ENCODE measurements at regions of chr5 and their contacts with region 1.

Region 1: GRCh38 chr5:108521841-108522506 is 140.1 kb upstream of the FBXL17 start:
- DNase-seq: peak; percentile 92
- ATAC-seq: peak; percentile 96
- H3K4me3 ChIP-seq: no peak overlapping the region
- H3K27ac ChIP-seq: no peak overlapping the region
- H3K4me1 ChIP-seq: no peaks in the 10 kb centered on the region
- H3K27me3 ChIP-seq: no peaks in the 10 kb centered on the region
- CTCF ChIP-seq: peak; percentile 94

Region 2: DNA sequence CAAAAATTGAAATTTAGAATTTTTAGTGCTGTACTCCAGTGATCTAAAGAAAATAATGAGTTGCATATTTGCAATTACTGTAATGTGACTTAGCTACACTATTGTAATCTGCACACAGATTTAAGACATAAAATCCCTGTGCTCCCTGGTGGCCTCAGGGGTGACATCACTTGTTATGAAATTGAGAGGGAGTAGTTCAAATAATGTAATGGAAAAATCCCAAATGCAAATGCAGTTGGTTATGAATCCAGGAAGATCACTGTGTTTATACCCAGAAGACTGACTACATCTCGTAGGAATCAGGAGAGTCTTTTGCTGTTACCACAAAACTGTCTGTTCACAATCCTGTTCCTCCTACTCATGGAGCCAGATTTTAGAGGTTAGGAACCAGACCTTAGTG is 38.6 kb after region 1 on chr5:
- CTCF ChIA-PET with region 1: no interaction called
- POLR2A ChIA-PET with region 1: no interaction called
- intact Hi-C with region 1: no loop called
- DNase-seq: peak; percentile 15
- ATAC-seq: peak; percentile 22
- H3K4me3 ChIP-seq: no peak overlapping the region
- H3K27ac ChIP-seq: no peak overlapping the region
- H3K4me1 ChIP-seq: no peaks in the 10 kb centered on the region
- H3K27me3 ChIP-seq: no peaks in the 10 kb centered on the region; the same call in 1 of the 2 replicates
- CTCF ChIP-seq: no peak

Region 3: DNA sequence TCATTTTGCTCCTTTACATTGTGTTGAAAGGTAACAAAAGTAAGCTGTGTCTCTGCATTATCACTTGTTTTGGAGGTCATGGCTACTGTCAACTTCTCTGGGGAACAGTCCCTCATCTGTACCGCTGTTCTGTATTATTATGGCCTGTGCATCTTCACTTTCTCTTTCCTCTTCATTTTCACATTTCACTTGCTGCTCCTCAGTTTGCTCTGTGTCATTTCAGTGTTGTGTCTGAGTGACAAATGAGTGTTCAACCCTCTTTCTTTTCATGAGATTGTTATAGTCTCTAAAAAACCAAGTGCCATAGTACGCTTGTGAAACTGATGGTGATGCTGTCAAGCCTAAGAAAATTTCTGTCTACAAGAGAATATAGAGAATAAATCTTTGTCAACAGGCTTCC is 103.7 kb after region 1 on chr5:
- CTCF ChIA-PET with region 1: no interaction called
- POLR2A ChIA-PET with region 1: no interaction called
- intact Hi-C with region 1: loop called (anchors 5 kb)
- DNase-seq: no peak
- ATAC-seq: no peak
- H3K4me3 ChIP-seq: no peak overlapping the region
- H3K27ac ChIP-seq: no peak overlapping the region
- H3K4me1 ChIP-seq: no peaks in the 10 kb centered on the region
- H3K27me3 ChIP-seq: no peaks in the 10 kb centered on the region
- CTCF ChIP-seq: no peak

Region 4: DNA sequence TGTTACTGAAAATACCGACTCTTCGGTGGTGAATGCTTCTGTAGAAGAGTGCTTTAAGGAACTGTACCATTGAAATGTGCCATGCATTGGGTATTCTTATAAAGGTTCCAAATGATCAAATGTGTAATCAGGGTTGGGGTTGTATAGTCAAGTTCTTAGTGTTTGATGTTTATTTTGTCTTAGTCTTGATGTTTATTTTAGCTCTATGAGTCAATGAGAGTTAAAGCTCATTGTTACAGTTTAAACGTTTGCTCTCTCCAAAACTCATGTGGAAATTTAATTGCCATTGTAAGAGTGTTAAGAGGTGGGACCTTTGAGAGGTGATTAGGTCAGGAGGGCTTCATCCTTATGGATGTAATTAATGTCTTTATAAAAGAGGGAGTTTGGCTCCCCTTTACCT is 378.7 kb after region 1 on chr5:
- CTCF ChIA-PET with region 1: no interaction called
- POLR2A ChIA-PET with region 1: no interaction called
- intact Hi-C with region 1: no loop called
- DNase-seq: peak; percentile 70
- ATAC-seq: peak; percentile 96
- H3K4me3 ChIP-seq: no peak overlapping the region
- H3K27ac ChIP-seq: peak overlapping the region; percentile 27
- H3K4me1 ChIP-seq: peaks cover 16% of the 10 kb centered on the region
- H3K27me3 ChIP-seq: no peaks in the 10 kb centered on the region
- CTCF ChIP-seq: no peak

Region 5: DNA sequence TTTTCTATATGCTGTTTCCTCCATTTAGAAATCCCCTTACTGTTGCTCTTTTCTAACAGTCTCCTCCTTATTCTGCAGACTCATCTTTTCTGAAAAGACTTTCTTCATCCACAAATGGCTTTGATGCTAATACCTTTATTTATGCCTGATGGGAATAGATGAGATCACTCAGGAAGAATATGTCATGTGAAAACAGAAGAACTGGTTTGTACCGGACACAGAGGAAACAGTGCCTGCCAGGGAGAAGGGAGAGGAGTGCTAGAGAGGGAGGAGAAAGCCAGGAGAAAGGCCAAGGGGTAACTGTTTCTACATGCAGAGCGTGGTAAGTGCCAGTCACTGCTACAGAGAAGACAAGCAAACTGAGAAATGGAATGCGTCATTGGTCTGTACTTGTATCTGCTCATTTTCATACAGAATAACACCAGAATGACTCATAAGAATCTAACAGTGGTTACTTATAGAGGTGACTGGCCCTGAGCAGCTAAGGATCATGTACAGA is 933.7 kb after region 1 on chr5:
- CTCF ChIA-PET with region 1: no interaction called
- POLR2A ChIA-PET with region 1: no interaction called
- intact Hi-C with region 1: loop called (anchors 10 kb)
- DNase-seq: peak; percentile 83
- ATAC-seq: peak; percentile 98
- H3K4me3 ChIP-seq: no peak overlapping the region
- H3K27ac ChIP-seq: peak overlapping the region; percentile 36
- H3K4me1 ChIP-seq: peaks cover 9% of the 10 kb centered on the region
- H3K27me3 ChIP-seq: no peaks in the 10 kb centered on the region
- CTCF ChIP-seq: no peak

Region 6: DNA sequence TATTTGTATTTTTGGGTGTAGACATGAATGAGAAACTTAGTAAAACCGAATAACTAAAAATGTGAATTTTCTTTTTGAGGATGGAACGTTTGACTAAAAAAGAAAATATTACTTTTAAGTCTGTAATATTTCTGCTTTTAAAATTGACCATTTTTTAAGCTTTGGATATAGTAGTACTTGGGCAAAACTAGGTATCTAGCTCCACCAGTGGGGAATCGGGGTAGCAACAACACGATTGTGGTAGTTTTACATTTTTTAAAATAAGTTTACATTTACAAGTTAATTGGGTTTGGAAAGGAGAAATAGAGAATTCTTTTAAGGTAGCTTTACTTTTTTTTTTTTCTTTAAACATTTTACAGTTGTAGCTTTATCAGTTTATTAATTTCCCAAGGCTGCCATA is 1322.2 kb after region 1 on chr5:
- CTCF ChIA-PET with region 1: no interaction called
- POLR2A ChIA-PET with region 1: no interaction called
- intact Hi-C with region 1: loop called (anchors 1 kb)
- DNase-seq: peak; percentile 55
- ATAC-seq: peak; percentile 56
- H3K4me3 ChIP-seq: no peak overlapping the region
- H3K27ac ChIP-seq: no peak overlapping the region
- H3K4me1 ChIP-seq: peaks cover 7% of the 10 kb centered on the region
- H3K27me3 ChIP-seq: no peaks in the 10 kb centered on the region
- CTCF ChIP-seq: peak; percentile 79

Region 7: GRCh38 chr5:110414360-110414759 is 1892.4 kb after region 1 on chr5:
- CTCF ChIA-PET with region 1: interaction called, 3 read pairs
- POLR2A ChIA-PET with region 1: no interaction called
- intact Hi-C with region 1: loop called (anchors 2 kb)
- DNase-seq: peak; percentile 31
- ATAC-seq: no peak
- H3K4me3 ChIP-seq: no peak overlapping the region
- H3K27ac ChIP-seq: no peak overlapping the region
- H3K4me1 ChIP-seq: no peaks in the 10 kb centered on the region
- H3K27me3 ChIP-seq: no peaks in the 10 kb centered on the region
- CTCF ChIP-seq: peak; percentile 68